Aorta (tissue), 5 donors: ENCODE measurements at regions of chr10 and their contacts with region 1.

Region 1: DNA sequence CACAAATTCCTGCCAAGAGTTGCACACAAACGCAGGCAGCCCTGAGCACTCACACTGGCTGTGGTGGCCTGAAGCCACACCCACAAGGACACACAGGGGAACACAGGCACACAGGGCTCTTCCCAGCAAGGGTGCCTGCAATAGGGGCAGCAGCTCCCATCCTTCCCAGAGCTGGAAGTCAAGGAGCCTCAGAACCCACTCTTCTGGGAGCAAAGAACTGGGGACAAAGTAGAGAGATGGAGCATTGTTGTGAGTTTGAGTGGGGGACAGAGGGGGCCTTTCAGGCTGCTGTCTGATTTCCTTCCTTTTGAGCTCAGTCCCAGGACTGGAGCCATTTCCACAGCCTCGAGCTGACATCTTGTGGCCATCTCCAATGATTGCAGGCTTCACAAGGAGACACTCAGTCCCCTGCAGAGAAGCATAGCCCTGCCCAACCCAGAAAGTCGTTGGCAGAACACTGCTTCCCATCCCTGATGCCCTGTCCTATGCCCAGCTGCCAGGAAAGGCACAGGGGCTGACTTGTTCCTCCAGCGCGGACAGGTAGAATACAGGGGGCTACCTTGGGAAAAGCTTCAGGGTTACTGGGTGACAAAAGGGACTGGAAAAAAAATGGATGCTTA is 34.4 kb upstream of the SLF2 start:
- DNase-seq: peak in 1 of 2 donors; percentile 62
- ATAC-seq: peak; percentile 53
- H3K4me3 ChIP-seq: no peak overlapping the region
- H3K27ac ChIP-seq: no peak overlapping the region
- H3K4me1 ChIP-seq: peaks cover 0 to 1% of the 10 kb centered on the region in 2 donors
- H3K27me3 ChIP-seq: no peaks in the 10 kb centered on the region

Region 2: GRCh38 chr10:100562008-100562711 is 316.2 kb before region 1 on chr10:
- intact Hi-C with region 1: loop called in 1 of 2 experiments (anchors 10 kb)
- DNase-seq: peak; percentile 68 to 80
- ATAC-seq: peak; percentile 69
- H3K4me3 ChIP-seq: no peak overlapping the region
- H3K27ac ChIP-seq: no peak overlapping the region
- H3K4me1 ChIP-seq: no peaks in the 10 kb centered on the region
- H3K27me3 ChIP-seq: no peaks in the 10 kb centered on the region